Activated CD4-positive, alpha-beta T cell treated with anti-CD3 and anti-CD28 coated beads for 36 hours (primary cell): ENCODE measurements at regions of chr5 and their contacts with region 1.

Region 1: GRCh38 chr5:33440482-33441240 is at the start of gene TARS1:
- DNase-seq: peak; percentile 96
- ATAC-seq: peak; percentile 96
- H3K4me3 Mint-ChIP-seq: no peak within 1 kb of the TSS
- H3K27ac Mint-ChIP-seq: no peak within 1 kb of the TSS
- H3K4me1 Mint-ChIP-seq: peaks cover 35% of the 10 kb centered on the region
- H3K27me3 Mint-ChIP-seq: no peaks in the 10 kb centered on the region
- total RNA-seq, gene TARS1: 285 to 357 TPM

Region 2: GRCh38 chr5:32174011-32174870 is 1266.4 kb before region 1 on chr5 and contains the start of gene GOLPH3:
- CTCF ChIA-PET with region 1: no interaction called
- POLR2A ChIA-PET with region 1: no interaction called
- intact Hi-C with region 1: loop called in 1 of 2 experiments (anchors 5 kb)
- DNase-seq: peak; percentile 98
- ATAC-seq: peak; percentile 86
- H3K4me3 Mint-ChIP-seq: peak within 1 kb of the TSS; percentile 87
- H3K27ac Mint-ChIP-seq: peak within 1 kb of the TSS; percentile 97
- H3K4me1 Mint-ChIP-seq: peaks cover 30% of the 10 kb centered on the region
- H3K27me3 Mint-ChIP-seq: no peaks in the 10 kb centered on the region
- total RNA-seq, gene GOLPH3: 54.2 to 58.3 TPM

Region 3: DNA sequence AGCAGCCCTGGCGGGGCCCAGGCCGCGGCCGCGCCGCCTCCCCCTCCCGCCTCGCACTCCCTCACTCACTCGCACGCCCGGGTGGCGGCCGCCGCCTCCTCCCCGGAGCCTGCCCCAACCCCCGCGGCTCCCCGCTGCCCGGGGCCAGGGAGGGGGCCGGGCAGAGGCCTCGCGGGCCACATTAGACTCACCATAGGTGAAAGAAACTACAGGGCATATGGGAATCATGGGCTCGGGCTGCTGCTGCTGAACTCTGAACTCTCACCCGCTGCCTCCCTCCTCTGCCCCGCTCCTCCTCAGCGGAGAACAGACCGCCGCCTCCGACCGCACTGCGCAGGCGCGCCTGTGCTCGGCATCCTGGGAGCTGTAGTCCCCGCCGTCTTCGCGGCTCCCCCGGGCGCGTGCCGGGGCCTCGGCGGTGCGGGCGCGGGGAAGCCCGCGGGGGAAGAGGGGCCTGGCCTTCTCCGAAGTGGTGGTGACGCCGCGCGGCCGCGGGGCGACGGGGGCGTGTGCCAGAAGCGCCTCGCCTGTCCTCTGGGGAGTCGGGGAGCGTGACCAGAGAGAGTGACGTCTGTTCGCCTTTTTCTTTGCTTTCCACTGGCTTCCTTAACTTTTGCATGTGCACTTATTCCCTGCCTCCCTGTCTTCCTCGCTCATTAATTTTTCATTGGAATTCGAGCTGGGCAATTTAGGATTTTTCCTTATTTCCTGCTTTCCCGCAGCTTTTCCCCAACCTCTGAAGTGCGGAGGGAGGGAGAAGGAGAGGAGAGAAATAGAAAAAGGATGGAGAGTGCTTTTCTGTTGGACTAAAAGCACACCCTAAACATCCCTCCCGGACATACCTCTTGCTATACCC is 996.0 kb before region 1 on chr5 and contains the start of gene ZFR:
- CTCF ChIA-PET with region 1: no interaction called
- POLR2A ChIA-PET with region 1: no interaction called
- intact Hi-C with region 1: loop called (anchors 1 to 5 kb)
- DNase-seq: peak; percentile 97
- ATAC-seq: peak; percentile 90
- H3K4me3 Mint-ChIP-seq: peak within 1 kb of the TSS; percentile 99
- H3K27ac Mint-ChIP-seq: peak within 1 kb of the TSS; percentile 99
- H3K4me1 Mint-ChIP-seq: peaks cover 34% of the 10 kb centered on the region
- H3K27me3 Mint-ChIP-seq: no peaks in the 10 kb centered on the region
- total RNA-seq, gene ZFR: 60.6 to 81.4 TPM

Region 4: GRCh38 chr5:33936004-33936380 is 495.3 kb after region 1 on chr5:
- CTCF ChIA-PET with region 1: interaction called, 15 read pairs
- POLR2A ChIA-PET with region 1: no interaction called
- intact Hi-C with region 1: loop called (anchors 1 kb)
- DNase-seq: peak; percentile 75
- ATAC-seq: peak; percentile 49
- H3K4me3 Mint-ChIP-seq: no peak overlapping the region
- H3K27ac Mint-ChIP-seq: no peak overlapping the region
- H3K4me1 Mint-ChIP-seq: no peaks in the 10 kb centered on the region
- H3K27me3 Mint-ChIP-seq: peaks cover 41% of the 10 kb centered on the region

Region 5: DNA sequence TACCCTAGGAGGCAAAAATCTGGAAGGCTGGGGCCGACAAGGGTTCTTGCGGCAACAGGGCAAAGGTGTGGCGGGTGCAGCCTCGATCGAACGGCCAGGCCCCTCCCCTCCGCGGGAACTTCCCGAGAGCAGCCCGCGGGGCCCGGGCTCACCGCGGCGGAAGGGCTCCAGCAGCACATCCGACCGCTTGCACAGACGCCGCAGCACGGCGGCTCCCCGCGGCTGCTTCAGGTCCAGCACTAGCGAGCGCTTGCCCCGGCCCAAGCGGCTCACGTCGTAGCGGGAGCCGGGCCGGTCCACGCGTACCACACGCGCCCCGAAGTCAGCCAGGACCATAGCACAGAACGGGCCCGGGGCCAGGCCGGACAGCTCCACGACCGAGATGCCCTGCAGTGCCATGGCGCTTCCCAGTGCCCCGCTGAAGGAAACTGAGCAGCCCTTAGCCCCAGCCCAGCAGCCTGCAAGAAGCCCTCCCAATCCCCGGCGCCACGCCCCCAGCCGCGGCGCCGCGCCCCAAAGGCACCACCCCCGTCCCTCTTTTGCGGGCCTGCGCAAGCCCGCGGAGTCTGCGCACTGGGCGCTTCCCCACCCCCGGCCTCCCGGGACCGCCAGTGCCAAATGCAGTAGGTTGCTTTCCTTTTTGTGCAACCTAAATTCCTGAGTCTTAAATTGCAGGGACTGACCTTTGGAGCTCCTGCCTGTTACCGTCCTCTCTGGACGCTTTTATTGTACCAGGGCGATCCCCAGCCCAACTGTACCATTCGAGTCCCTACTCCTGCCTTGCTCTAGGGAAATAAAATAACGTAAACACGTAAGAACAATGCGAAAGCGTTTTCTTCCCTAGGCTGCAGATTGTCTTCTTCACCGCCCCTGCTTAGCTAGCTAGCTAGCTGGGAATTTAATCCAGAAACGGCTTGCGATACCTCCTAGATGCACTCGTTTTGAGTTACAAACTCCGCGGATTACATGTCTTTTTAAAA is 567.2 kb after region 1 on chr5 and contains the start of gene AMACR:
- CTCF ChIA-PET with region 1: no interaction called
- POLR2A ChIA-PET with region 1: no interaction called
- intact Hi-C with region 1: loop called (anchors 1 to 2 kb)
- DNase-seq: peak; percentile 96
- ATAC-seq: peak; percentile 95
- H3K4me3 Mint-ChIP-seq: peak within 1 kb of the TSS; percentile 77
- H3K27ac Mint-ChIP-seq: peak within 1 kb of the TSS; percentile 90
- H3K4me1 Mint-ChIP-seq: peaks cover 32% of the 10 kb centered on the region
- H3K27me3 Mint-ChIP-seq: no peaks in the 10 kb centered on the region
- total RNA-seq, gene AMACR: 3.3 to 6.0 TPM

Region 6: DNA sequence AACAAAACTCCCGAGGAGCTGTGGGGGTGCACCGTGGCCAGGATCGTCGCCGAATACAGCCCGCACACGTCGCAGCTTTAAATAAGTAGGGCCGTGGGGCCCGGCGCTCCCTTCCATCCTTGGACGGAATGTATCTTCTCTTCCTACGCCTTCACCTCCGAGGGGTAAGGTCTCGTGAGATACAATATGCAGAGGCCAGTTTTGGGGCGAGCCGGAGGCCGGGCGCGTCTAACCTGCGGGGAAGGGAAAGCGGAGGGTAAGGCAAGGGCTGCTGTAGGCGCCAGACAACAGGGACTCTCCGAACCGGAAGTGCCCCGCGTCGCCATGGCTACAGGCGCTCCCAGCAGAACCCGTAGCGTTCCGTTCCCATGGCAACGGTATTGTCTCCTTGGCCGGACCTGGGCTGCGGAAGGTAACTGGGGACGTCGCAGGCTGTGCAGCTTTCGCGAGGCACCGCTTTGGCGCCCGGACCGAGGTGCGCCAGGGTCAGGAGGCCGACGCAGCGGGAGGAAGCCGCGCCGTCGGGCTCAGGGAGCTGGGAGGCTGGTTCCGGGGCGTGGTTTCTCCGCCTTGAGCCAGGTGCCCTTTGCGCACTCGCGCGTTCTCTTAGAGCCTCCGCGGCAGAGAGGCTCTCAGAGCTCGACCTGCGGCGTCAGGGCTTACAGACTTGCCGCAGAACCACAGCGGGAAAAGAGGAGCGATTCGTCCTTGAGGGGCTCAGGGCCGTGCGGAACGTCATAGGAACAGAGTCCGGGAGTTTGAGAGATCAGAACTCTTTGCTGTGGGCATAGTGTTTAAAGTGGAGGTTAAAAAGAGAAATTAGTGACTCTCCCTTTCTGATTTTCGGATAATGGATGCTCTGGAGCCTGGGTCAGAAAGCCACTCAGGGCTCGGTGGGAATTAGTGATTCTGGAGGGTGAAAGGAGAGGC is 1398.4 kb after region 1 on chr5 and contains the start of gene TTC23L:
- CTCF ChIA-PET with region 1: no interaction called
- POLR2A ChIA-PET with region 1: no interaction called
- intact Hi-C with region 1: loop called in 1 of 2 experiments (anchors 1 kb)
- DNase-seq: peak; percentile 95
- ATAC-seq: peak; percentile 95
- H3K4me3 Mint-ChIP-seq: peak within 1 kb of the TSS; percentile 80
- H3K27ac Mint-ChIP-seq: peak within 1 kb of the TSS; percentile 95
- H3K4me1 Mint-ChIP-seq: peaks cover 13% of the 10 kb centered on the region
- H3K27me3 Mint-ChIP-seq: no peaks in the 10 kb centered on the region
- total RNA-seq, gene TTC23L: 0.26 to 0.30 TPM

Region 7: GRCh38 chr5:34929150-34929719 is 1488.6 kb after region 1 on chr5 and contains the start of gene DNAJC21:
- CTCF ChIA-PET with region 1: no interaction called
- POLR2A ChIA-PET with region 1: no interaction called
- intact Hi-C with region 1: loop called in 1 of 2 experiments (anchors 10 kb)
- DNase-seq: peak; percentile 99
- ATAC-seq: peak; percentile 95
- H3K4me3 Mint-ChIP-seq: peak within 1 kb of the TSS; percentile 90
- H3K27ac Mint-ChIP-seq: peak within 1 kb of the TSS; percentile 93
- H3K4me1 Mint-ChIP-seq: peaks cover 43% of the 10 kb centered on the region
- H3K27me3 Mint-ChIP-seq: no peaks in the 10 kb centered on the region
- total RNA-seq, gene DNAJC21: 58.5 to 58.6 TPM